SK-N-SH (cell line): ENCODE measurements at regions of chr15 and their contacts with region 1.

Region 1: GRCh38 chr15:40108855-40109735 is at the start of gene BMF:
- DNase-seq: peak; percentile 97
- H3K4me3 ChIP-seq: peak within 1 kb of the TSS; percentile 78 to 85
- H3K27ac ChIP-seq: peak within 1 kb of the TSS; percentile 23 to 76; a peak in 2 of 4 replicates
- H3K4me1 ChIP-seq: peaks cover 5 to 30% of the 10 kb centered on the region in 2 experiments; a peak in 3 of 4 replicates
- H3K27me3 ChIP-seq: peaks cover 21% of the 10 kb centered on the region; the same call in 1 of the 2 replicates
- CTCF ChIP-seq: peak; percentile 52
- EP300 ChIP-seq: peak in 1 of 2 experiments; percentile 38; a peak in 1 of 4 replicates
- RAD21 ChIP-seq: no peak; the same call in 1 of the 2 replicates
- polyA plus RNA-seq, gene BMF: 0.72 and 1.0 TPM in 2 replicates

Region 2: GRCh38 chr15:40044717-40045571 is 64.2 kb before region 1 on chr15:
- CTCF ChIA-PET with region 1: interaction called, 153 read pairs
- POLR2A ChIA-PET with region 1: no interaction called
- DNase-seq: peak; percentile 92
- H3K4me3 ChIP-seq: peak overlapping the region; percentile 25 to 51; a peak in 3 of 4 replicates
- H3K27ac ChIP-seq: no peak overlapping the region; a peak in 2 of 4 replicates
- H3K4me1 ChIP-seq: peaks cover 23 to 29% of the 10 kb centered on the region in 2 experiments
- H3K27me3 ChIP-seq: no peaks in the 10 kb centered on the region
- CTCF ChIP-seq: peak; percentile 95
- EP300 ChIP-seq: no peak
- RAD21 ChIP-seq: peak; percentile 97

Region 3: GRCh38 chr15:40069178-40070165 is 39.6 kb before region 1 on chr15:
- CTCF ChIA-PET with region 1: interaction called, 20 read pairs
- POLR2A ChIA-PET with region 1: no interaction called
- DNase-seq: peak; percentile 98
- H3K4me3 ChIP-seq: no peak overlapping the region
- H3K27ac ChIP-seq: peak overlapping the region; percentile 17 to 93; a peak in 3 of 4 replicates
- H3K4me1 ChIP-seq: peaks cover 7 to 32% of the 10 kb centered on the region in 2 experiments
- H3K27me3 ChIP-seq: no peaks in the 10 kb centered on the region
- CTCF ChIP-seq: no peak
- EP300 ChIP-seq: peak; percentile 51 to 75; a peak in 3 of 4 replicates
- RAD21 ChIP-seq: no peak; the same call in none of the 2 replicates

Region 4: DNA sequence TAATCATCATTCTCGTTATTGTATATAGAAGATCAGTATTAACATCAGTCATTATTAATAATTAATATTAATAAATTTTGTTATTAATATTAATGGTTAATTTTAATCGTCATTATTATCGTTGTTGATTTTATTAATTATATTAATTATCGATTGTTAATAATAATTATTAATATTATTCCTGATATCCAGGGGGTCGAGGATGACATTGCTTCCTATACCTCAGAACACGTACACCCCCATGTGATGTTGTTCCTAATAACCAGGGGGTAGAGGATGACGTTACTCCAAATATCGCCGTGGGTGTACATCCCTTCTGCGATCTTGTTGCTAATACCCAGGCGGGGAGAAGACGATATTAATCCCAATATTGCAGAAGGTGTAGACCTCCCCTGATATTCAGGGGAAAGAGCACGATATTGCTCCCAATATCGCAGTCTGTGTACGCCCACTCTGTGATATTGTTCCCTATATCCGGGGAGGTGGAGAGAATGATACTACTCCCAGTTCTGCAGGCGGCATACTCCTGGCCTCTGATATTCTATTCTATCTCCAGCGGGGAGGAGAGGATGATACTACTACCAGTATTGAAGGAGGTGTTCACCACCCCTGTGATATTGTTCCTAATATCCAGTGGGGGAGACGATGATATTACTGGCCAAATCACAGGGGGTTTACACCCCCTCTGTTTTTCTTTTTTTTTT is 21.9 kb after region 1 on chr15:
- CTCF ChIA-PET with region 1: no interaction called
- POLR2A ChIA-PET with region 1: no interaction called
- DNase-seq: no peak
- H3K4me3 ChIP-seq: no peak overlapping the region
- H3K27ac ChIP-seq: no peak overlapping the region
- H3K4me1 ChIP-seq: no peaks in the 10 kb centered on the region
- H3K27me3 ChIP-seq: peaks cover 20% of the 10 kb centered on the region; the same call in 1 of the 2 replicates
- CTCF ChIP-seq: no peak
- EP300 ChIP-seq: no peak
- RAD21 ChIP-seq: no peak

Region 5: DNA sequence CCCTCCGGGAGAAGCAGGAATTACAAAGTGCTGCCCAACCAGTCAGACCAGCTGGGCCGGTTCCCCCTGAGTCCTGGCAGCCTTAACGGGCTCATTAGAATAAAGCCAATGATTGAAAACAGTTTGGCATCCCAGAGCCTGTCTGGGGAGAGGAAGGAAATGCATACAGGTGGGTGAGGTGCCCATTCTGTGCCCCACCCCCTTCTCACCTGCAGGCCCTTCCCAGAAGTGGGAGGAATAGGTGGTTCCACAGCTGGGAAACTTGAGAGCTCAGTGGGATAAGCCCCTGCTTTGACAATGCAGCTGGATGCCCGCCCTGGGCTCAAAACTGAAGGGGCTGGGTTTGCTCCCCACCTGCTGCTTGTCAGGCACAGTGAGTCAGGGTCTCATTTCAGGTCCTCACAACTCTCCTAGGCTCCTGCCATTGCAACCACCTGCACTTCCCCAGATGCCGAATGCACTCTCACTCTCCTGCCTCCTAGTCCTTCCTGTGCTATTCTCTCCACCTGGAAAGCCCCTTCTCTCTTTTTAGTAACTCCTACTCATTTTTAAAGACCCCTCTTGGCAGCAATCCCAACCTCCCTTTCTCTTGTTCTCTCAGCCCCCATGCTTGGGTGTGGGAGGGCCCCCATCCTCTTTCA is 46.3 kb after region 1 on chr15:
- CTCF ChIA-PET with region 1: interaction called, 21 read pairs
- POLR2A ChIA-PET with region 1: no interaction called
- DNase-seq: no peak
- H3K4me3 ChIP-seq: no peak overlapping the region
- H3K27ac ChIP-seq: no peak overlapping the region
- H3K4me1 ChIP-seq: peaks cover 0 to 4% of the 10 kb centered on the region in 2 experiments; a peak in 1 of 4 replicates
- H3K27me3 ChIP-seq: no peaks in the 10 kb centered on the region
- CTCF ChIP-seq: no peak
- EP300 ChIP-seq: no peak
- RAD21 ChIP-seq: no peak

Region 6: GRCh38 chr15:40175160-40175559 is 66.1 kb after region 1 on chr15:
- CTCF ChIA-PET with region 1: interaction called, 14 read pairs
- POLR2A ChIA-PET with region 1: no interaction called
- DNase-seq: no peak
- H3K4me3 ChIP-seq: no peak overlapping the region
- H3K27ac ChIP-seq: no peak overlapping the region
- H3K4me1 ChIP-seq: no peaks in the 10 kb centered on the region
- H3K27me3 ChIP-seq: no peaks in the 10 kb centered on the region
- CTCF ChIP-seq: no peak
- EP300 ChIP-seq: no peak
- RAD21 ChIP-seq: no peak

Region 7: GRCh38 chr15:40274350-40275274 is 165.5 kb after region 1 on chr15:
- CTCF ChIA-PET with region 1: interaction called, 30 read pairs
- POLR2A ChIA-PET with region 1: no interaction called
- DNase-seq: peak; percentile 88
- H3K4me3 ChIP-seq: peak overlapping the region in 1 of 2 experiments; percentile 30; a peak in 1 of 4 replicates
- H3K27ac ChIP-seq: no peak overlapping the region
- H3K4me1 ChIP-seq: peaks cover under 1 to 5% of the 10 kb centered on the region in 2 experiments; a peak in 1 of 4 replicates
- H3K27me3 ChIP-seq: no peaks in the 10 kb centered on the region
- CTCF ChIP-seq: peak; percentile 100
- EP300 ChIP-seq: no peak
- RAD21 ChIP-seq: peak; percentile 93

Region 8: DNA sequence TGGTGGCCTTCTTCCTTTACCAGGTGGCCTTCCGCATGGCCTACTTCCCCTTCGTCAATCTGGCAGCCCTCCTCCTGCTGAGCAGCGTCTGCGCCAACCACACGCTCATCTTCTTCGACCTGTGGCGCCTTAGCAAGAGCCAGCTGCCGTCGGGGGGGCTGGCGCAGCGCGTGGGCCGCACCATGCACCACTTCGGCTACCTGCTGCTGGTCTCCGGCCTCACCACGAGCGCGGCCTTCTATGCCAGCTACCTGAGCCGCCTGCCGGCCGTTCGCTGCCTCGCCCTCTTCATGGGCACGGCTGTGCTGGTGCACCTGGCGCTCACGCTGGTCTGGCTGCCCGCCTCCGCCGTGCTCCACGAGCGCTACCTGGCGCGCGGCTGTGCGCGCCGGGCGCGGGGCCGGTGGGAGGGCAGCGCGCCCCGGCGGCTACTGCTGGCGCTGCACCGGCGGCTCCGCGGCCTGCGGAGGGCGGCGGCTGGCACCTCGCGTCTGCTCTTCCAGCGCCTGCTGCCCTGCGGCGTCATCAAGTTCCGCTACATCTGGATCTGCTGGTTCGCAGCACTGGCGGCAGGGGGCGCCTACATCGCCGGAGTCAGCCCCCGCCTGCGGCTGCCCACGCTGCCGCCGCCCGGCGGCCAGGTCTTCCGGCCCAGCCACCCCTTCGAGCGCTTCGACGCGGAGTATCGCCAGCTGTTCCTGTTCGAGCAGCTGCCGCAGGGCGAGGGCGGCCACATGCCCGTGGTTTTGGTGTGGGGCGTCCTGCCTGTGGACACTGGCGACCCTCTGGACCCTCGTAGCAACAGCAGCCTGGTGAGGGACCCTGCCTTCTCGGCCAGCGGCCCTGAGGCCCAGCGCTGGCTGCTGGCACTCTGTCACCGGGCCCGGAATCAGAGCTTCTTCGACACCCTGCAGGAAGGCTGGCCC is 258.9 kb after region 1 on chr15:
- CTCF ChIA-PET with region 1: no interaction called
- POLR2A ChIA-PET with region 1: no interaction called
- DNase-seq: peak; percentile 88
- H3K4me3 ChIP-seq: no peak overlapping the region; a peak in 1 of 4 replicates
- H3K27ac ChIP-seq: no peak overlapping the region; a peak in 1 of 4 replicates
- H3K4me1 ChIP-seq: peaks cover 0 to 17% of the 10 kb centered on the region in 2 experiments; a peak in 1 of 4 replicates
- H3K27me3 ChIP-seq: no peaks in the 10 kb centered on the region
- CTCF ChIP-seq: peak; percentile 52
- EP300 ChIP-seq: peak in 1 of 2 experiments; percentile 15; a peak in 1 of 4 replicates
- RAD21 ChIP-seq: peak; percentile 29

Region 9: DNA sequence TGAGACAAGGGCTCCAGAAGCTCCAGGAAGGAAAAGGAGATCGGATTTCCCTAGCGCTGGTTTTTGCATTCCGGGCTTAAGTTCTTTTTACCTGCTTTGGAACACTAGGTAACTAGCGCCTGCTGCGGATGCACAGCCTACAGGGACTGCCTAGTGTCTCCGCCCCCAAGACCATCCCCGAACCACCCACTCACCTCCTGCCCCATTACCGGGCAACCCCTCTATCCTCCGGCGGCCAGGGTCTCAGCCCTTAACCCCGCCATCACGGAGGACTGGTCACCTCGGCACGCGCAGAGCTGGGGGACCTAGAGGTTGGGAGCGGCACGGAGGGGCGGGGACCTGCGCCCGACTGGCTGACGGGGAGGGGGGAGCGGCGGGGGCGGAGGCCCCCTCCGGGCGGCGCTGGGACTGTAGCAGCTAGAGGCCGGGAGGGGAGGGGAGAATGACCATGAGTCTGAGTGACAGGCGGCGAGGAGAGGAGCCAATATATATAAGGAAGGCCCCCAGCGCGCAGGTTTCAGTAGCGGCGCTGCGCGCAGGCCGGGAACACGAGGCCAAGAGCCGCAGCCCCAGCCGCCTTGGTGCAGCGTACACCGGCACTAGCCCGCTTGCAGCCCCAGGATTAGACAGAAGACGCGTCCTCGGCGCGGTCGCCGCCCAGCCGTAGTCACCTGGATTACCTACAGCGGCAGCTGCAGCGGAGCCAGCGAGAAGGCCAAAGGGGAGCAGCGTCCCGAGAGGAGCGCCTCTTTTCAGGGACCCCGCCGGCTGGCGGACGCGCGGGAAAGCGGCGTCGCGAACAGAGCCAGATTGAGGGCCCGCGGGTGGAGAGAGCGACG is 819.9 kb after region 1 on chr15 and contains the start of gene DLL4:
- CTCF ChIA-PET with region 1: no interaction called
- POLR2A ChIA-PET with region 1: no interaction called
- DNase-seq: peak; percentile 80
- H3K4me3 ChIP-seq: peak within 1 kb of the TSS; percentile 46 to 60
- H3K27ac ChIP-seq: no peak within 1 kb of the TSS
- H3K4me1 ChIP-seq: peaks cover 17 to 44% of the 10 kb centered on the region in 2 experiments; a peak in 2 of 4 replicates
- H3K27me3 ChIP-seq: peaks cover 53% of the 10 kb centered on the region
- CTCF ChIP-seq: no peak
- EP300 ChIP-seq: no peak
- RAD21 ChIP-seq: no peak
- polyA plus RNA-seq, gene DLL4: 0.03 TPM in 2 replicates